ENCODE measurements at regions of chr7 and their contacts with region 1.

Region 1: DNA sequence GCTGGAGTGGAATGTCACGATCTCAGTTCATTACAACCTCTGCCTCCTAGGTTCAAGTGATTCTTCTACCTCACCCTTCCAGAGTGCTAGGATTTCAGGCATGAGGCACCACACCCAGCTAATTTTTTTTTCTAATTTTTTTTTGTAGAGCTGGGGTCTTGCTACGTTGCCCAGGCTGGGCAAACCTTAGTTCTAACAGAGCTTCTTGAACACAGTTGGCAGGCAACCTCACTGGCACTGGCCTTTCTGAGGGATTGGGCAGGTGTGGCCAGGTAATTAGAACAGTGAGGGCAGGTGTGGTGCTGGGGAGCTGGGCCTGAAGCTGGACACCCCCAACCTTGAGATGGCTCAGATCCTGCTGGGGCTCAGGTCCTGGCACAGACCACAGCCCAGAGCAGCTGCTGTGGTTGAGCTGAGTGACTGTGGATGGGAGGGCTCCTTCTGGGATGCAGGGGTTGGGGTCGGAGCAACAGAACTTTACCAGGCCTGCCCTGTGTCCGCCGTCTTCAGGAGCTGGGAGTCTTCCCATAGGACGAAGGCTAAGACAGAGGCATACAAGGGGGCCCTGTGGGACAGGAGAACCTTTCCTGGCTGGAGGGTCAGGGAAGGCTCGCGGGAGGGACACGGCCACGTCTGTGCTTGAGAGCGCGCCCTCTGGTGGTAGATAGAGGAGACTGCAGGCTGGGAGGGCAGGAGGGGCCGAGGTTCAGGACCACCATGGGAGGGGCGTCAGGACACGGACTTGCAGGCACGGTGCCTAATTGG is 48.2 kb downstream of the COL26A1 start:
- DNase-seq: peak; percentile 83
- CTCF ChIP-seq: peak; percentile 84

Region 2: DNA sequence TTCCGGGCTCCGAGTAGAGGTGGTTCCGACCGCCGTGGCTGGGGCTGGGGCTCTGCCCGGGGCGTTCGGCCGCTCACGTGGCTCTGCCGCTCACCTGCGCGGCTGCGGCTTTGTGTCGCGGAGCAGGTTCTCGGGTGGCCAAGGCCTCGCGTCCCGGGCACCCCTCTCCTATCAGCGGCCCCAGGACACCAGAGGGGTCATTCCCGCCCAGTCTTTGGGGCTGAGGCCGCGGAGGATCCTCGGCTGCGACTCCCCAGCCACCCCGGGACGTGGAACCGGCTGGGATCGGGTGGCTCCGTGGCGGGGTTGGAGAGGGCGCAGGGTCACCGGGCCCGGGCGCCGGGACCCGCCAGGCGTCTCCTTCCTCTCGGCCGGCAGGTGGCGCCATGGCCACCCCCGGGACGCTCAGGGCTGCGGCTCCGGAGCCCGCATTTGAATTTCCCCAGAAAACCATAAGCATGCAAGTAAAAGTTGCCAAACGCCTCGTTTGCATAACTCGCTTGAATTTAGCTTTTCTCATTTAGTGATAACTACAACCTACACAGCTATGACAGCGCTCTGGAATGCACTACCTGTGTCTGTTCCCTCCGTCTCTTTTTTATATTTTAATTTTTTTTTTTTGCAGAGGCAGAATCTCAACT is 47.1 kb before region 1 on chr7:
- in situ Hi-C with region 1: loop called (anchors 10 kb)
- DNase-seq: peak; percentile 91
- CTCF ChIP-seq: peak; percentile 81